Activated T-helper 1 cell treated with anti-CD3 and anti-CD28 coated beads, Interleukin-12 subunit alpha, Interleukin-12 subunit beta, Interleukin-2, Interleukin-4 antibody, amounts not matched to agents 30 ng/mL and 10 ng/mL and 1 ng/mL, durations not matched to agents 14 hours and 24 hours and 36 hours (primary cell): ENCODE measurements at regions of chr10 and their contacts with region 1.

Region 1: DNA sequence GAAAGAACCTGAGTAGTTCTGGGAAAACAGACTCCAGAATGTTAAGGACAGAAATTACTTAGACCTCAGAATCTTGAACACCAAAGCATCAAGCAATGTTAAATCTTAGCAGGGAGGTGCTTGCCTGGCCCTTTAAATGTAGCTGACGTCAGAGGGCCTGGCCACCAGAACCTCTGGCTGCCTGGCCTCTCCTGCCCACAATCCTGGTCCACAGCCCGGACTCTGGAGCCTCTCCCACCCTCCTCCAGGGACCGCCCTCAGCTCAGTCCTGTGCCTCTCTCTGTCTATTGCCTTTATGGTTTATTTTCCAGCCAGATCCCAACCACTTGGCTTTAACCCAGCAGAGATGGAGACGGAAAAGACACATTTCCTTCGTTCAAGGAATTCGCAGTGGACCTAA is 42.2 kb upstream of the EGR2 start:
- DNase-seq: no peak
- H3K4me3 Mint-ChIP-seq: no peak overlapping the region
- H3K27ac Mint-ChIP-seq: no peak overlapping the region
- H3K4me1 Mint-ChIP-seq: peaks cover 60% of the 10 kb centered on the region
- H3K27me3 Mint-ChIP-seq: peaks cover 6% of the 10 kb centered on the region

Region 2: DNA sequence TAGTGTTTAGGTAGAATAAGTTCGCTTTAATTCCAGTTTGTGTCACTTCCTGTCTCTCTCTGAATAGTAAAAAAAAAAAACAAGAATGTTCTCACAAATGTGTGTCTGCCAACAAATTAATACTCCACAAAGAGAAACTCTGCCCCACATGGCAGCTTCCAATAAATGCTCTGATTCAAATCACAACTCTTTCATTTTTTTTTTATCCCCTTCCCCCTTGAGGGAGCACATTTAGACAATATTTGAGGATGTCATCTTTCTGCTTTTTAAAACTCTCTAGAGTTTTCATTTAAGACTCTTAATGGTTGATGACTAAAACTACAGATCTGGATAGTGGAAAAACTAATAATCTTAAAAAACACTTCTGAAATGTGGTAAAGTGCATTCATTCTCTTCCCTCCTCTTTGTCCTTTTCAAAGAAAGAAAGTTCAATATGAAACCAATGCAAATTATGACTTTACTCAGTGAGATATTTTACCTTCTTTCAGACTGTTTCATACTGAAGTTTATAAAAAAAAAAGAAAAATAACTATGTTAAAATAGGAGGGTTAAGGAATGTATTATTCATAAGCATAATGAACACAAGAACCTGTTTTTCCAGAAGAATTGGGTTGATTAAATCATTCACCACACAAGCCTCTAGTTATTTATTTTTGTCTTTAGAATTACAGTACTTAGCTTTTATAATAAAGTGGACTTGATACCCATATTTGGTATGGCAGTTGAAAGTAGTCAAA is 914.5 kb before region 1 on chr10:
- intact Hi-C with region 1: loop called (anchors 1 kb)
- DNase-seq: no peak
- H3K4me3 Mint-ChIP-seq: peak overlapping the region; percentile 77
- H3K27ac Mint-ChIP-seq: peak overlapping the region; percentile 95
- H3K4me1 Mint-ChIP-seq: peaks cover 58% of the 10 kb centered on the region
- H3K27me3 Mint-ChIP-seq: no peaks in the 10 kb centered on the region

Region 3: GRCh38 chr10:62610649-62611229 is 247.6 kb before region 1 on chr10:
- intact Hi-C with region 1: loop called (anchors 1 kb)
- DNase-seq: peak; percentile 65
- H3K4me3 Mint-ChIP-seq: no peak overlapping the region
- H3K27ac Mint-ChIP-seq: peak overlapping the region; percentile 11
- H3K4me1 Mint-ChIP-seq: peaks cover 59% of the 10 kb centered on the region
- H3K27me3 Mint-ChIP-seq: peaks cover 9% of the 10 kb centered on the region

Region 4: DNA sequence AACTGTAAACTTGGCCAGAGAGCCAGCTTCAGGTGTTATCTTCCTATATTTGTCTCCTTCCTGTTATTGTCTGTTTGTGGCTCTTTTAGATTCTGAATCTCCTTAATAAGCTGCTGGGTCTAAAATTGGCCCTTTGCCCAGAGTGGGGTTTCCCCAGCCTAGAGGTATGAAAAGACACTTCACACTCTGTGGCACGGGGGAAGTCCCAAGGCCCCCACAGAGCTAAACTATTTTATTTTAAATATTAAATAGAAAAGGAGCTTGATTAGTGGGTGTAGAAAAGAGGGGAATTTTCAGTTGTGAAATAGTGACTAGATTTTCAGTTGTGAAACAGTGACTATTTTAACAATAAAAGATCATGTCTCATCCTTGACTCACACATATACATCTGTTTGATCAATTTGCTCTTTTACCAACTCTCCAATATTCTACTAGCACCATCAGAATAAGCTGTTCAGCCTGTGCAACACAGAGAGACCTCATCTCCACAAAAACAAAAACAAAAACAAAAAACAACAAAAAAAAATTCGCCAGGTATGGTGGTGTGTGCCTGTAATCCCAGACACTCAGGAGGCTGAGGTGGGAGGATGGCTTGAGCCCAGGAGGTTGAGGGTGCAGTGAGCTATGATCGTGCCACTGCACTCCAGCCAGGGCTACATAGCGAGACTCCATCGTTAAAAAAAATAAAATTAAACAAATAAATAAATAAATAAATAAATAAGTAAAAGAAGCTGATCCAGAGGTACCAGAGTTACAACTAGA is 78.7 kb before region 1 on chr10:
- intact Hi-C with region 1: loop called (anchors 1 kb)
- DNase-seq: peak; percentile 48
- H3K4me3 Mint-ChIP-seq: peak overlapping the region; percentile 27
- H3K27ac Mint-ChIP-seq: peak overlapping the region; percentile 76
- H3K4me1 Mint-ChIP-seq: peaks cover 45% of the 10 kb centered on the region
- H3K27me3 Mint-ChIP-seq: peaks cover 19% of the 10 kb centered on the region

Region 5: DNA sequence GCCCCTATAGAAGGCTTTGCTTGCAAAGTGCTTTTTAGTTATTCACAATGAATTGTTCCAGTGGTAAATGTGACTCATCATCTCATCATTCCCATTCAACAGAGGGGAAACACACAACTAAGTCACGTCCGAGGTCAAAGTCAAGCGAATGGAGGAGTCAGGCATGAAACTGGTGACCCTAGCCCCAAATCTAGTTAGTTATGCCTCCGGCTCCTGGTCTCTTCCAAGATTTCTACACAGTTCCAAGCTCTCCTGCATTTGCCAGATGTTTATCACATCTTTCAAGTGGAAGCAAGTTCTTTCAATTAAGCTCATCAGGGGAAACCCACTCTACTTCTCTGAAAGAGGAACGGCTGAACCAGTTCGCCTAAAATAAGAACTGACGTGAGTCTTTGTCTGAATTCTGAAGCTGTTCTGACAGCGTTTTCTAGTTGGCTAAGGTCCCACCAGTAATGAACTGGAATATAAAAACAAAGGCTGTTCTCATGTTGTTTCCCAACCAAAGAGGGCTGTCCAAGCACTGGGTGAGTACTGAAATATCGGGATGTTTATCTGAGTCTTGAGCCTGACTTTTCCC is 133.9 kb after region 1 on chr10:
- intact Hi-C with region 1: loop called (anchors 1 kb)
- DNase-seq: no peak
- H3K4me3 Mint-ChIP-seq: peak overlapping the region; percentile 58
- H3K27ac Mint-ChIP-seq: peak overlapping the region; percentile 94
- H3K4me1 Mint-ChIP-seq: peaks cover 52% of the 10 kb centered on the region
- H3K27me3 Mint-ChIP-seq: peaks cover 4% of the 10 kb centered on the region

Region 6: GRCh38 chr10:63133056-63133820 is 274.9 kb after region 1 on chr10 and contains the start of gene NRBF2:
- intact Hi-C with region 1: loop called (anchors 1 kb)
- DNase-seq: peak; percentile 97
- H3K4me3 Mint-ChIP-seq: peak within 1 kb of the TSS; percentile 91
- H3K27ac Mint-ChIP-seq: peak within 1 kb of the TSS; percentile 83
- H3K4me1 Mint-ChIP-seq: peaks cover 32% of the 10 kb centered on the region
- H3K27me3 Mint-ChIP-seq: peaks cover 3% of the 10 kb centered on the region
- total RNA-seq, gene NRBF2: 30.0 and 30.8 TPM in 2 replicates

Region 7: GRCh38 chr10:63173468-63174232 is 315.3 kb after region 1 on chr10:
- intact Hi-C with region 1: loop called (anchors 1 kb)
- DNase-seq: no peak
- H3K4me3 Mint-ChIP-seq: peak overlapping the region; percentile 61
- H3K27ac Mint-ChIP-seq: peak overlapping the region; percentile 86
- H3K4me1 Mint-ChIP-seq: peaks cover 78% of the 10 kb centered on the region
- H3K27me3 Mint-ChIP-seq: no peaks in the 10 kb centered on the region